Upper lobe of right lung (tissue), 1 donor: ENCODE measurements at regions of chr17 and their contacts with region 1.

Region 1: GRCh38 chr17:79789534-79790353 is 7.1 kb downstream of the CBX8 start:
- DNase-seq: peak; percentile 79
- ATAC-seq: peak; percentile 85
- H3K4me3 ChIP-seq: no peak overlapping the region
- H3K27ac ChIP-seq: no peak overlapping the region
- H3K4me1 ChIP-seq: peaks cover 16% of the 10 kb centered on the region
- H3K27me3 ChIP-seq: peaks cover 79% of the 10 kb centered on the region
- CTCF ChIP-seq: peak; percentile 80

Region 2: DNA sequence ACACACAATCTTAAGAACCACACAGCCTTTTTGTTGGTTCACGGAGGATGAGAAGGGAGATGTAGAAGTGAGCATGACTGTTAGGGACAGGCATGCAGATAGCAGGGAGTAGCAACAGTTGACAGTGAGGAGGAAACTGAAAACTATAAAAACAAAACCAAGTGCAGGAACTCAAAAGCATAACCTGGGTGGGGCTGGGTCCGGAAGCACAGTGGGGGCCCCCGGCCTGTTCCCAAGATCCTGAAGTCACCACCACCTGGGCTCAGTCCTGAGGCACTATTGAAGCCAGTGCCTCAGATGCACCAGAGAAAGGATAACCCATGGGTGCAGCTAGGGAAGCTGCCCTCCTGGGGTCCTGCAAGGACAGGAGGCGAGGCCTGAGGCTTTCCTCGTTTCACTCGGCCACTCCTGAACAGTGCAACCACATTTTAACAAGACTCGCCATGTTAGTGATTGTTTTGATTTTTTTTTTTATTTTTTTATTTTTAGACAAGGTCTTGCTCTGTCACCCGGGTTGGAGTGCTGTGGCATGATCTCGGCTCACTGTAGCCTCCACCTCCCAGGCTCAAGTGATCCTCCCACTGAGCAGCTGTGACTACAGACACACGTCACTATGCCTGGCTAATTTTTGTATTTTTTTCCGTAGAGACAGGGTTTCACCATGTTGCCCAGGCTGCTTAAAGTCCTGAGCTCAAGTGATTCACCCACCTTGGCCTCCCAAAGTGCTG is 77.2 kb after region 1 on chr17:
- intact Hi-C with region 1: no loop called
- DNase-seq: no peak
- ATAC-seq: no peak
- H3K4me3 ChIP-seq: no peak overlapping the region
- H3K27ac ChIP-seq: no peak overlapping the region
- H3K4me1 ChIP-seq: no peaks in the 10 kb centered on the region
- H3K27me3 ChIP-seq: peaks cover 21% of the 10 kb centered on the region
- CTCF ChIP-seq: no peak

Region 3: GRCh38 chr17:79915850-79916430 is 126.2 kb after region 1 on chr17:
- intact Hi-C with region 1: loop called (anchors 10 kb)
- DNase-seq: peak; percentile 84
- ATAC-seq: peak; percentile 76
- H3K4me3 ChIP-seq: no peak overlapping the region
- H3K27ac ChIP-seq: peak overlapping the region; percentile 30
- H3K4me1 ChIP-seq: peaks cover 11% of the 10 kb centered on the region
- H3K27me3 ChIP-seq: no peaks in the 10 kb centered on the region
- CTCF ChIP-seq: peak; percentile 37

Region 4: GRCh38 chr17:79970576-79971068 is 180.9 kb after region 1 on chr17:
- intact Hi-C with region 1: loop called (anchors 10 kb)
- DNase-seq: peak; percentile 59
- ATAC-seq: peak; percentile 79
- H3K4me3 ChIP-seq: no peak overlapping the region
- H3K27ac ChIP-seq: no peak overlapping the region
- H3K4me1 ChIP-seq: no peaks in the 10 kb centered on the region
- H3K27me3 ChIP-seq: no peaks in the 10 kb centered on the region
- CTCF ChIP-seq: peak; percentile 55

Region 5: GRCh38 chr17:80637048-80637781 is 847.5 kb after region 1 on chr17:
- intact Hi-C with region 1: no loop called
- DNase-seq: no peak
- ATAC-seq: peak; percentile 23
- H3K4me3 ChIP-seq: no peak overlapping the region
- H3K27ac ChIP-seq: no peak overlapping the region
- H3K4me1 ChIP-seq: peaks cover 3% of the 10 kb centered on the region
- H3K27me3 ChIP-seq: no peaks in the 10 kb centered on the region
- CTCF ChIP-seq: no peak